Caco-2 (cell line): ENCODE measurements at regions of chr7 and their contacts with region 1.

Region 1: DNA sequence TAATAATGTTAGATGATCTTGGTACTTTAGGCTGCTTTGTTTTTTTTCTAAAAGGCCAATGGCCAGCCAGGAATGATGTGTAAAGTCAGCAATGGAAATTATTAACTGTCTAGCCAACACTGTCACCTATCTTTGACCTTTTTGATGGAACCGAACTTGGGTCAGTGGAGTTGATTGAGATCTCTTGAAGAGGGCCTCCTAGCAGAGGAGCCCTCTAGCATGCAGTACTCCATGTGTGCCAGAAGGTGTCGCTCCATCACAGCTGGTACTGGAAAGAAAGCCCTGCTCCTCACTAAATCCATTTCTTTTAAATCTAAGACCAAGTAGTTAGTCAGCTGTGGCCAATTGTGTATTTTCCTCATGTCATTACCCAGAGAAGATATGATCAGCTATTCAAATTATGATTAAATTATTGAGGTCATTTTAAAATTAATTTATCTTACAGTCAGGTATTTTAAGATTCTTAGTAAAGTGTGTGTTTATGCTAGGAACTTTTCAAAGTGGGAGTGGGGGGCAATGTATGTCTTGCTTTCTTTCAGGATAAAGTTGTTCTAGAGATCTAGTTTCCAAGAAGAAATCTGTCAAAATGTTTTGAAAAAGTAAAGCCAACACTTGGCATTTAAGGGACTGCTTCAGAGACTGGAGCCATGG is 33.1 kb upstream of the CROT start:
- DNase-seq: peak; percentile 56 to 73
- H3K4me3 ChIP-seq: no peak overlapping the region
- H3K4me3 Mint-ChIP-seq: no peak overlapping the region
- H3K27ac Mint-ChIP-seq: no peak overlapping the region
- H3K4me1 ChIP-seq: no peaks in the 10 kb centered on the region
- H3K4me1 Mint-ChIP-seq: peaks cover 5% of the 10 kb centered on the region
- H3K27me3 ChIP-seq: no peaks in the 10 kb centered on the region
- H3K27me3 Mint-ChIP-seq: no peaks in the 10 kb centered on the region
- CTCF ChIP-seq: peak; percentile 95 to 97

Region 2: DNA sequence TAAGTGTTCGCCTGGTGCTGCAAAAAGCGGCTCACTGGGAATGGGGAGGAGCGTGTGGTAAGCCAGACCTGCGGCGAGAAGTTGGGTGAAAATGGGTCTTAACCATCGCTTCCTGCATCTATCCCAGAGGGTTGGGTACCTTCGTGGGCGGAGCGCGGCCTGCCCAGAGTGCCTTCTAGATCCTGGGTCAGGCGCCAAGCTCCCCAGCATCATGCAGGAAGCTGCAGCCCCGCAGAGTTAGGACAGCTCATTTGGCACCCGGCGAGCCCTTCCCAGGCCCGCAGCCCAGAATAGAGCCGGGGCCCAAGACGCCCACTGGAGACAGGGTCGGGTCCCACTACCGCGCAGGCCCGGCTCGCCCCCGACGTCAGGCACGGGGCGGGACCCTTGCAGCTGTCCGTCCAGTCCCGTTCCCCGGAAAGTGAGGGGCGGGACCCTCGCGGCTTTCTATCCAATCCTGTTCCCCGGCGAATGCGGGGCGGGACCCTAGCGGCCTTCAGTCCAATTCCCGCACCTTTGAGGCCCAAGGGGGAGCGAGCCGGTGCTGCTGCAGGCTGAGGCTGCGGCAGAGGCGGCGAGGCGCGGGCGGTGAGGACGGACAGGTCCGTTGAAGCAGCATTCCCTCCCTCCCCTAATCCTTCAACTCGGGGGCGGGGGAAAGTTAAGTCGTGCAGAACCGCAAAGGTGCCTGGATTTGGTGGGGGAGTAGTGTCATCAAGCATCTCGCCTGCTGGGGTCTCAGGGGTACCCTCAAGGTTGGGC is 33.0 kb after region 1 on chr7 and contains the start of gene CROT:
- CTCF ChIA-PET with region 1: interaction called, 3 read pairs
- POLR2A ChIA-PET with region 1: no interaction called
- intact Hi-C with region 1: loop called (anchors 1 kb)
- DNase-seq: peak; percentile 96 to 97
- H3K4me3 ChIP-seq: peak within 1 kb of the TSS; percentile 71
- H3K4me3 Mint-ChIP-seq: peak within 1 kb of the TSS; percentile 84
- H3K27ac Mint-ChIP-seq: peak within 1 kb of the TSS; percentile 80
- H3K4me1 ChIP-seq: peaks cover 9% of the 10 kb centered on the region; the same call in 1 of the 2 replicates
- H3K4me1 Mint-ChIP-seq: no peaks in the 10 kb centered on the region
- H3K27me3 ChIP-seq: no peaks in the 10 kb centered on the region
- H3K27me3 Mint-ChIP-seq: no peaks in the 10 kb centered on the region
- CTCF ChIP-seq: no peak
- total RNA-seq, gene CROT: 15.4 and 16.9 TPM in 2 replicates

Region 3: DNA sequence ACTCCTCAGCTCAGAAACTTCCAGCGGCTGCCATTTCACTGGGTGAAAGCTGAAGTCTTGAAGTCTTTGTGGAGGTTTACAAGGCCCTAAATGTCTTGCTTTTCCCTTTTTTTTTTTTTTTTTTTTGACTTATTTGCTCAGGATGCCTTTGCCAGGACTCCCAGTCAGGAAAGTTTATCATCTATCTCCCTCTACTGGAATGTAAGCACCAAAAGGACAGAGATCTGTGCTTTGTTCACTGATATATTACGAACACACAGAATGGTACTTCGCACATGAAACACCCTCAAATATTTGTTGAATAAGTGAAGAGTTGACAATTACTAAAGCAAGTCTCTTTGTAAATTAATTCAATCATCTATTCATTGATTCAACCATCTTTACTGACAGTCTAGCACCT is 139.9 kb after region 1 on chr7:
- CTCF ChIA-PET with region 1: no interaction called
- POLR2A ChIA-PET with region 1: no interaction called
- intact Hi-C with region 1: loop called (anchors 1 kb)
- DNase-seq: no peak
- H3K4me3 ChIP-seq: no peak overlapping the region
- H3K4me3 Mint-ChIP-seq: no peak overlapping the region
- H3K27ac Mint-ChIP-seq: no peak overlapping the region
- H3K4me1 ChIP-seq: peaks cover 5% of the 10 kb centered on the region; the same call in 1 of the 2 replicates
- H3K4me1 Mint-ChIP-seq: no peaks in the 10 kb centered on the region
- H3K27me3 ChIP-seq: no peaks in the 10 kb centered on the region
- H3K27me3 Mint-ChIP-seq: no peaks in the 10 kb centered on the region
- CTCF ChIP-seq: no peak

Region 4: DNA sequence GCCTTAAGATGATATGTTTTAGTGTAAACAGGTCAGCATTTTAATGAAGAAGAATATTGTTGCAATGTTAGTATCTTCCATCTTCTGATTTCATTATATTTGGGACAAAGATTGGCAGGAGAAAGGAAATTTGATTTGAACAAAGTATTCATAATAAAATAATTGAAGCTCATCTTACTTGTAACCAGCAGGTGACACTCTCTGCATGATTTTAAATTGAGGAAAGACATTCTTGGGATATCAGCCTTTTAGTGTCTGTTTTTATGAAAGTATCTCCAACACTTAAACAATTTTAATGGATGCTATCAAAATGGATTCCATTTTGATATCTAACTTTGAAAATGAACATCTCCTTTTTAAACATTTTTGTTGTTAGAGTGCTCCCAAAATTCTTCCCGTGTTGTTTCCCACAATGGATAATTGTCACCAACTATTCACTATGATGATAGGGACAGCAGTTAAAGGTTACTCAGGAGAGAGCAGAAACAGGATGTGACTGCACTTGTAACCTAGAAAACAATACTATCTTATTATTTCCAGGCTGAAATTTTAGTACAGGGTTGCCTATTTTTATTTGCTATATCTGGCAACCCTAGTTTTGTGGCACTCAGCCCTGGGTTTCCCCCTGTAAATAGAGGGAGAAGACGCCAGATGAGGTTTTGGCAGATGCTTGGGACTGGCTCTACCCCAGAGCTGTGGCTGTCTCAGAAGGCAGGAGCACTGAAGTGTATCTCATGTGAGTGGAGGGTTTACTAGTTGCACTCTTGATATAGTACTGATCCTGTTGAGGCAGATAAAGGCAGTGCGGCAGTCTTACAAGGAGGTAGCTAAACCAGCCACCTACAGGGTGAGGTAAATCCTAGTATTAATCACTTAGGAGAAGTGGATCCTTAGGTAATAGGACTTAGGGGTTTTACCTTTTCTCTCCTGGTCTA is 194.2 kb after region 1 on chr7:
- CTCF ChIA-PET with region 1: no interaction called
- POLR2A ChIA-PET with region 1: no interaction called
- intact Hi-C with region 1: loop called (anchors 1 kb)
- DNase-seq: no peak
- H3K4me3 ChIP-seq: no peak overlapping the region
- H3K4me3 Mint-ChIP-seq: no peak overlapping the region
- H3K27ac Mint-ChIP-seq: no peak overlapping the region
- H3K4me1 ChIP-seq: no peaks in the 10 kb centered on the region
- H3K4me1 Mint-ChIP-seq: no peaks in the 10 kb centered on the region
- H3K27me3 ChIP-seq: no peaks in the 10 kb centered on the region
- H3K27me3 Mint-ChIP-seq: no peaks in the 10 kb centered on the region
- CTCF ChIP-seq: peak; percentile 11 to 42